Left ventricle myocardium superior (tissue), 1 donor: ENCODE measurements at regions of chr3 and their contacts with region 1.

Region 1: DNA sequence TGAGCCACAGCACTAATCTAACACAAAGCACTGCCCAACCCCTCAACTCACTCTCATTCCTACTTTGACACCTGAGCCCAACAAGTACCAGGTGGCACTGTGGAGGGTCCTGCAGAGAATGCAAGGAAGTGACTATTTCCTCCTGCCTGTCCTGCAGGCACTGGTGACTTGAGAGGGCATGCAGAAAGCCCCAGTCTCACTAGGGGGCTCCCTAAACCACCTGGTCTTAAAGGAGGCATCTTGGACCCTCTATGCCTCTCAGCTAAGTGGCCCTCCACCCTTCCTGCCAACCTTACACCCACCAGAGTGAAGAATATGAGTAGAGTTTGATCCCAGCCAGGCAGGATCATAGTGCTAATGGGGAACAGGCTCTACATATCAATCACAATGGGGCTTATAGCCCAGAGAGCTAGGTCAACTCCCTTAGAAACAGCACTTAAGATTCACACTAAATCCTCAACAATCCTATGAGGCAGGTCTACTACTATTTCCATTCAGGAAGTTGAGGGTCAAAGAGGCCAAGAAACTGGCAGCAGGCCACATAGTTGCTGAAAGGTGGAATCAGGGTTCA is 15.2 kb downstream of the TRAIP start:
- DNase-seq: no peak
- ATAC-seq: no peak

Region 2: GRCh38 chr3:49802719-49803464 is 38.3 kb before region 1 on chr3 and contains the start of gene INKA1:
- intact Hi-C with region 1: loop called (anchors 5 kb)
- DNase-seq: peak; percentile 94
- ATAC-seq: peak; percentile 82
- total RNA-seq, gene INKA1: 1.7 TPM

Region 3: DNA sequence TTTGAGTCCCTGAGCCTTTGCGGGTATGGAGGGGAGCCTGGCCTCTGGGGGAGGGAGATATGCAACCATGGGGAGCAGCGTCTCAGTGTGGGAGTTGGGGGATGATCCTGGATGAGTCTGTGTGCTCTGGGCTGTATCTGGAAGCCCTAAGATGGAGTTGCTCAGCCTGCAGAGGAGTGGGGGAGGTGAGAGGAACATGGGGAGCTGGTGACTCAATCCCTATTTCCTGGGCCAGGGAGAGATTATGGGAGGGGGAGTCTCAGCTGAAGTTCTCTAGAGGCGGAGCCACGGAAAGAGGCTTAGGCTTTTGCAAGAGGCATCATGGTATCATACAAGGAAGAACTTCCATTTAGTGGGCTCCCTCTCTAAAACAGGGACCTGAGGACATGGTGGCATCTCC is 577.6 kb after region 1 on chr3:
- intact Hi-C with region 1: no loop called
- DNase-seq: no peak
- ATAC-seq: no peak